ENCODE measurements at regions of chr10 and their contacts with region 1.

Region 1: DNA sequence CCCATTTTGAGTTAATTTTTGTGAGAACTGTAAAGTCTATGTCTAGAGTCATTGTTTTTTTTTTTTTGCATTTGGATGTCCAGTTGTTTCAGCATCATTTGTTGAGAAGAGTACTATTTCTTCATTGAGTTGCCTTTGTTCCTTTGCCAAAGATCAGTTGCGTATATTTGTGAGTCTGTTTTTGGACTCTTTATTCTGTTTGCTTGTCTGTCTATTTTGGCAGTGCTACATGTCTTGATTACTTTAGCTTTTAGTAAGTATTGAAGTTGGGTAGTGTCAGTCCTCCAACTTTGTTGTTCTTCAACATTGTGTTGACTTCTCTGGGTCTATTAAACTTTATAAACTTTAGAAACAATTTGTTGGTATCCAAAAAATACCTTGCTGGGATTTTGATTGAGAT is 31.6 kb downstream of the CCDC7 start:
- DNase-seq: no peak

Region 2: GRCh38 chr10:31947144-31947926 is 530.2 kb before region 1 on chr10:
- intact Hi-C with region 1: no loop called
- DNase-seq: no peak

Region 3: GRCh38 chr10:32367793-32368453 is 109.6 kb before region 1 on chr10:
- intact Hi-C with region 1: no loop called
- DNase-seq: no peak

Region 4: GRCh38 chr10:32454148-32454547 is 23.4 kb before region 1 on chr10:
- intact Hi-C with region 1: no loop called
- DNase-seq: no peak

Region 5: GRCh38 chr10:34444223-34445183 is 1967.0 kb after region 1 on chr10:
- intact Hi-C with region 1: loop called in 1 of 2 experiments (anchors 5 kb)
- DNase-seq: no peak